ENCODE measurements at regions of chr13 and their contacts with region 1.

Region 1: DNA sequence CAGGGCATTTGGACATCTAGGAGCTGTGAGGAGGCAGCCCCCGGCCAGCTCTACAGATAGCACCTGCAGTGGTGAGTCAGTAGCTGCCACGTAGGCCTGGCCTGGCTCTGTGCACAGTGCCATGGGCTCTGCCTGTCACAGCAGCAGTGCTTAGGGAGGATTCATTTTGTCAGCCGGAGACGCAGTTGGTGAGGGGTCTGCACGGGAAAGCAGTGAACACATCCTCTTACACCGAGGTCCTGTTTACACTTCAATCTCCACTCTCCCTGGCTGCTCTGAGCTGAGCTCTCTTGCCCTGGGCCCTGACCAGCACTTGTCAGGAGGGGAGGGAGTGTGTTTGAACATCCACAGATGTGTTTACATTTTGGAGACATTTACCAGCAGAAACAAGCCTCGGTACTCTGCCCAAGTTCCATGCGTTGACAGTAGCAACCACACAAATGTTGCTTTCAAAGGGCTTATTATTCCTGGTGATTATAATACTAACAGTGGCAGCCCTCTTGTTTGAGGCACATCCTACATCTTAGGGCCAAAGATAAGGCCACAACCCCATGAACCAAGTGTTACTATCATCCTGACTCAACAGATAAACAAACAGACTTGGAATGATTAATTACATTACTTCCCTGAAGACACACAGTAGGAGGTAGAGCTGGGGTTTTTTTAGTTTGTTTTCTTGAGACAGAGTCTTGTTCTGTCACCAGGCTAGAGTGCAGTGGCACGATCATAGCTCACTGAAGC is 148.9 kb downstream of the USP12 start:
- DNase-seq: no peak
- H3K4me3 Mint-ChIP-seq: no peak overlapping the region
- H3K27ac Mint-ChIP-seq: peak overlapping the region; percentile 31
- H3K4me1 Mint-ChIP-seq: peaks cover 11% of the 10 kb centered on the region
- H3K27me3 Mint-ChIP-seq: peaks cover 2% of the 10 kb centered on the region

Region 2: GRCh38 chr13:26996965-26997752 is 25.6 kb before region 1 on chr13:
- intact Hi-C with region 1: loop called (anchors 1 kb)
- DNase-seq: no peak
- H3K4me3 Mint-ChIP-seq: no peak overlapping the region
- H3K27ac Mint-ChIP-seq: peak overlapping the region; percentile 14
- H3K4me1 Mint-ChIP-seq: peaks cover 8% of the 10 kb centered on the region
- H3K27me3 Mint-ChIP-seq: peaks cover 15% of the 10 kb centered on the region